Activated B cell treated with CpG ODN at 0.5 μM for 24 hours (primary cell): ENCODE measurements at regions of chr1 and their contacts with region 1.

Region 1: GRCh38 chr1:39609618-39610331 is 29.7 kb downstream of the HEYL start:
- DNase-seq: peak; percentile 62
- ATAC-seq: peak; percentile 84
- H3K4me3 Mint-ChIP-seq: no peak overlapping the region
- H3K27ac Mint-ChIP-seq: no peak overlapping the region
- H3K4me1 Mint-ChIP-seq: peaks cover 11% of the 10 kb centered on the region
- H3K27me3 Mint-ChIP-seq: peaks cover 9% of the 10 kb centered on the region
- CTCF ChIP-seq: no peak

Region 2: DNA sequence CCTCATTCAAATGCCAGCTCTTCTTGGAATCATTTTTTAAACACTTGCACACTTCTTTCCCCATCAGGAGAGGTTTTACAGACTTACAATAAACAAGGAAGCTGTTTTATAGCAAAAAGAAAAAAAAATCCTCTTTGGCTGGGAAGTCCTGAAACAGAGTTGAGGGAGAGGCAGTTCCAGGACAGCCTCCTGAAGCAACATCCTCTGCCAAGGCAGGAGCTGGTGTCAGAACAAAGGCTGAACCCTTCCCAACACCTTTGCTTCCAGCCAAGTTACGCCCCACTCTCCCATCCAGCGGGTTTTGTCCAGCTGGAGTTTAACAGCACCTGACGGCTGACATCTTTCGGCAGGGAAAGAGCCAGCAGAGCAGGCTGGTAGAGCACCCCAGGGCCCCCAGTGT is 1038.0 kb before region 1 on chr1:
- CTCF ChIA-PET with region 1: no interaction called
- POLR2A ChIA-PET with region 1: no interaction called
- intact Hi-C with region 1: no loop called
- DNase-seq: no peak
- ATAC-seq: no peak
- H3K4me3 Mint-ChIP-seq: no peak overlapping the region
- H3K27ac Mint-ChIP-seq: no peak overlapping the region
- H3K4me1 Mint-ChIP-seq: no peaks in the 10 kb centered on the region
- H3K27me3 Mint-ChIP-seq: peaks cover 24% of the 10 kb centered on the region
- CTCF ChIP-seq: no peak

Region 3: DNA sequence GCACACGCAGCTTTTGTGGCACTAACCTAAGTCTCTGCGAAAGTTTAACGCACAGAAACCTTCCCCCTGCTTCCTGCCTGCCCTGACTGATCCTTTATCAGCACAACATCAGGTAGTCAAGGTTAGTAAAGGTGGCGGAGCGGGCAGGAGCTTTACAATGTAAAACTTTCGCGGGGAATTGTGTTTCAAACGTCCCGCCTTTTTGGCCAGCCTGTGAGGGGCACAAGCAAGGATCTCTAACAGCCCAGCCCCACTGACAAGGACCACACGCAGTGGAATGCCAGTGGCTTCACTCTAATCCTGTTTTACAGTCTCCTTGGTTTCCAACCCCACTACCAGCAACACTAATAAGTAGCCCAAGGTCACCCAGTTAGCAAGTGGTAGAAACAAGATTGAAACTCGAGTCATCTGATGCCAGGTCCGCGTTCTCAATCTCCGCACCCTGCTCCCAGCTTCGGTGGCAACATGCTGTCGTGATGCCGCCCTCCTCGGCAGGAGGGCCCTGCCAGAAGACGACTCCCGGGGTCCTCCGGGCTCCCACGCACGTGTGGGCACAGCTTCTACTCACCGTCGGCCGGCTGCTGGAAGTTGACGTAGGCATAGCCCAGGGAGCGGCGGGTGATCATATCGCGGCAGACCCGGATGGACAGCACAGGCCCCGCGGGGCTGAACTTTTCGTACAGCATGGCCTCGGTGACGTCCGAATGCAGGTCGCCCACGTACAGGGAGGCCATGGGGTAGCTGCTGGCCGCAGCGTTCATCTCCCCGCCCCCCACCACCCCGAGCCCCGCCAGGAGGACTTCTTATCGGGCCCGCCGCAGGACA is 34.4 kb before region 1 on chr1:
- CTCF ChIA-PET with region 1: no interaction called
- POLR2A ChIA-PET with region 1: no interaction called
- intact Hi-C with region 1: loop called (anchors 2 kb)
- DNase-seq: peak; percentile 33
- ATAC-seq: peak; percentile 23
- H3K4me3 Mint-ChIP-seq: peak overlapping the region; percentile 89
- H3K27ac Mint-ChIP-seq: peak overlapping the region; percentile 82
- H3K4me1 Mint-ChIP-seq: peaks cover 35% of the 10 kb centered on the region
- H3K27me3 Mint-ChIP-seq: no peaks in the 10 kb centered on the region
- CTCF ChIP-seq: no peak

Region 4: GRCh38 chr1:39639305-39640130 is 29.7 kb after region 1 on chr1 and contains the start of gene HEYL:
- CTCF ChIA-PET with region 1: interaction called, 8 read pairs
- POLR2A ChIA-PET with region 1: interaction called, 11 read pairs
- intact Hi-C with region 1: no loop called
- DNase-seq: peak; percentile 53
- ATAC-seq: peak; percentile 79
- H3K4me3 Mint-ChIP-seq: peak within 1 kb of the TSS; percentile 66
- H3K27ac Mint-ChIP-seq: no peak within 1 kb of the TSS
- H3K4me1 Mint-ChIP-seq: peaks cover 2% of the 10 kb centered on the region
- H3K27me3 Mint-ChIP-seq: peaks cover 37% of the 10 kb centered on the region
- CTCF ChIP-seq: no peak
- total RNA-seq, gene HEYL: not detected in 2 replicates

Region 5: GRCh38 chr1:39653546-39654031 is 43.8 kb after region 1 on chr1:
- CTCF ChIA-PET with region 1: interaction called, 63 read pairs
- POLR2A ChIA-PET with region 1: no interaction called
- intact Hi-C with region 1: loop called (anchors 1 kb)
- DNase-seq: peak; percentile 53
- ATAC-seq: peak; percentile 80
- H3K4me3 Mint-ChIP-seq: no peak overlapping the region
- H3K27ac Mint-ChIP-seq: no peak overlapping the region
- H3K4me1 Mint-ChIP-seq: peaks cover 7% of the 10 kb centered on the region
- H3K27me3 Mint-ChIP-seq: peaks cover 14% of the 10 kb centered on the region
- CTCF ChIP-seq: peak; percentile 75

Region 6: GRCh38 chr1:39720094-39720999 is 110.6 kb after region 1 on chr1:
- CTCF ChIA-PET with region 1: interaction called, 10 read pairs
- POLR2A ChIA-PET with region 1: interaction called, 3 read pairs
- intact Hi-C with region 1: loop called (anchors 1 kb)
- DNase-seq: no peak
- ATAC-seq: peak; percentile 62
- H3K4me3 Mint-ChIP-seq: no peak overlapping the region
- H3K27ac Mint-ChIP-seq: no peak overlapping the region
- H3K4me1 Mint-ChIP-seq: peaks cover 2% of the 10 kb centered on the region
- H3K27me3 Mint-ChIP-seq: peaks cover 37% of the 10 kb centered on the region
- CTCF ChIP-seq: peak; percentile 51

Region 7: GRCh38 chr1:39799770-39800470 is 190.1 kb after region 1 on chr1:
- CTCF ChIA-PET with region 1: interaction called, 15 read pairs
- POLR2A ChIA-PET with region 1: interaction called, 7 read pairs
- intact Hi-C with region 1: loop called (anchors 1 kb)
- DNase-seq: peak; percentile 64
- ATAC-seq: peak; percentile 68
- H3K4me3 Mint-ChIP-seq: peak overlapping the region; percentile 81
- H3K27ac Mint-ChIP-seq: peak overlapping the region; percentile 93
- H3K4me1 Mint-ChIP-seq: peaks cover 11% of the 10 kb centered on the region
- H3K27me3 Mint-ChIP-seq: no peaks in the 10 kb centered on the region
- CTCF ChIP-seq: no peak

Region 8: GRCh38 chr1:39901698-39902459 is 292.1 kb after region 1 on chr1 and contains the start of gene MYCL:
- CTCF ChIA-PET with region 1: interaction called, 4 read pairs
- POLR2A ChIA-PET with region 1: no interaction called
- intact Hi-C with region 1: loop called (anchors 5 kb)
- DNase-seq: peak; percentile 63
- ATAC-seq: peak; percentile 81
- H3K4me3 Mint-ChIP-seq: peak within 1 kb of the TSS; percentile 75
- H3K27ac Mint-ChIP-seq: no peak within 1 kb of the TSS
- H3K4me1 Mint-ChIP-seq: peaks cover 6% of the 10 kb centered on the region
- H3K27me3 Mint-ChIP-seq: peaks cover 42% of the 10 kb centered on the region
- CTCF ChIP-seq: peak; percentile 46
- total RNA-seq, gene MYCL: 0.10 and 0.29 TPM in 2 replicates